ENCODE measurements at regions of chr11 and their contacts with region 1.

Region 1: DNA sequence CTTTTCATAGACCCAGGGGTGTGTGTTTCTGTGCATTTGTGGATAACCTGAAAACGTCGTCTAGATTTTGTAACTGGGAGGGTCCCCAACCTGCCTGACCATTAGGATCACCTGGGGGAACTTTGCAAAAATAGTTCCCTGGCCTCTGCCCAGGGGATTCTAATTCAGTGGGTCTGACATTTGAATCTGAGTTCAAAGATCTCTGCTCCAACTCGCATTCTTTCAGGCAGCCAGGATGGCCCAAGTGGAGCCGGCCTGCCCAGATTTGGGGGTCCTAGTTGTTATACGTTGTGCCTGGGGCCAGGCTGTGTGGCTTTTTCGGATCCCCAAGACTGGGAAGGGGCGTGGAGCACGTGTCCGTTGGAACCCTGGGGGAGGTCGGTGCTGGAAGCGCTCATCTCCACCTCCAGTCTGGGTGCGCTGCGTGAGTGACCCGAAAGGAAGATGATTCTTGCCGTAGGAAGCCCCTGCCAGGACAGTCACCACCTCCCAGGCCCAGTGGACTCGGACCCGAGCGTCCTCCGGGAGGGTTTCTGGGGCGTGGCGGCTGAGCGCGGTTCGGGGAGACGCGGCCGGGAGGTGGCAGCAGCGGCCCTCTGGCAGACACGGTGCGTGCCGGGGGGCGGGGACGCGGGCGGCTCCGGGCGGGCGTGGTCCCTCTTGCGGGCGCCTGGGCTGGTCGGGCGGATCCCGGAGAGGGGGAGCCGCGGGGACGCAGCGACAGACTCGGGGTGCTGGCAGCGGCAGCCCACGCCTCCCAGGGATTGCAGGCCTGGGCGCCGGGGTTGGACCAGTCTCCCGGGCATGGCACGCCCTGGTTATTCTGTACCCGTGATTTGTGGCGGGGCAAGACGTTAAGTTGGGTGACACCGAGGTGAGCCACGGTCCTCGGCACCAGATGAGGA is 29.2 kb upstream of the PLET1 start:
- DNase-seq: peak; percentile 88 to 91 (median 90)
- ATAC-seq: peak; percentile 98
- H3K4me3 ChIP-seq: no peak overlapping the region
- H3K4me1 ChIP-seq: peaks cover 14% of the 10 kb centered on the region
- CTCF ChIP-seq: peak; percentile 74

Region 2: DNA sequence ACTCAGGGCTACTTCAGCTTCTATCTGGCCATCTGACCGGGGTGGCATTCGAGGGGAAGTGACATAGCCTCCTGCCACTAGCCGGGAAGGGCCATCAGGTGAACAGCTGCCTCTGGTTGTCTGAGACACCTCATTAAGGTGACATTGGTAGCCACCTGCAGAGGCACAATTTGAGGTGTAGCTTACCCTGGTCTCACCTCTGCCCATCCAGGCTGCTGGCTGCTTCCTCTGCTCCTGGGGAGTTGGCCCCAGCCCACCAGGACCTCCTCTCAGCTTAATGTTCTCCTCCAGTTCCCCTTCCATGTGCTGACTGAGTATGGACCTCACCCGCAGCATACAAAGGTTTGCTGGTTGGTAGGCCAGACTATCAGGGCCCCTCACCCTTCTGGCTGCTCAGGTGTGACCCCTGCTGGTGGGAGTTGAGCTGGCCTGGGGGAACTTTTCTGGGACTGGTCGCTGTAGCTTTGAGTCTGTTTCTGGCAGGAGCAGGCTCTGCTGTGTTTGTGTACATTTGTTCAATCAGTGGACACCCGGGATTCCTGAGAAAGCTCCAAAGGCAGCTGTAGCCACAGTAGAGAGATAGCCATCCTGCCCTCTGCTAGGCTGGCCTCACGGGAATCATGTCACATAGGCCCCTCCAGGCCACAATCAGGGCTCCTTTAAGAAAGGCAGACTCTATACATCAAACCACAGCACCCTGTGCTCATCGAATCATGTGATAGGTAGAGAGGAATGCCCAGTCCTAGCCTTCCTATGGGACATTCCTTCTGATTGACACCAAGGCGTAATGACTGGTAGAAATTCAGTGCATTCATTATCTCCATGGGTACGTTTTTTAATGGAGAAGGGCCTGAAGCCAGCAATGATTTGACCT is 265.9 kb after region 1 on chr11:
- intact Hi-C with region 1: loop called in 1 of 2 experiments (anchors 10 kb)
- DNase-seq: peak; percentile 45 to 75 (median 70)
- ATAC-seq: peak; percentile 72
- H3K4me3 ChIP-seq: no peak overlapping the region
- H3K4me1 ChIP-seq: no peaks in the 10 kb centered on the region
- CTCF ChIP-seq: peak; percentile 35

Measured in mucosa of descending colon (tissue), 3 donors.